ENCODE measurements at regions of chr7 and their contacts with region 1.

Region 1: GRCh38 chr7:144174613-144175012 is 8.7 kb upstream of the CTAGE4 start:
- DNase-seq: no peak
- ATAC-seq: no peak

Region 2: GRCh38 chr7:144137501-144137900 is 37.1 kb before region 1 on chr7:
- intact Hi-C with region 1: no loop called
- DNase-seq: no peak
- ATAC-seq: no peak

Region 3: GRCh38 chr7:144391823-144392255 is 217.2 kb after region 1 on chr7:
- intact Hi-C with region 1: loop called (anchors 5 kb)
- DNase-seq: no peak
- ATAC-seq: peak; percentile 89

Region 4: GRCh38 chr7:144416341-144416740 is 241.7 kb after region 1 on chr7:
- intact Hi-C with region 1: no loop called
- DNase-seq: no peak
- ATAC-seq: no peak

Measured in Right ventricle myocardium superior (tissue), 1 donor.